HEK293T (cell line): ENCODE measurements at regions of chr5 and their contacts with region 1.

Region 1: GRCh38 chr5:31470608-31471007 is 61.3 kb downstream of the DROSHA start:
- DNase-seq: no peak

Region 2: GRCh38 chr5:31449174-31449573 is 21.4 kb before region 1 on chr5:
- CTCF ChIA-PET with region 1: interaction called, 11 read pairs
- POLR2A ChIA-PET with region 1: no interaction called
- DNase-seq: no peak

Region 3: DNA sequence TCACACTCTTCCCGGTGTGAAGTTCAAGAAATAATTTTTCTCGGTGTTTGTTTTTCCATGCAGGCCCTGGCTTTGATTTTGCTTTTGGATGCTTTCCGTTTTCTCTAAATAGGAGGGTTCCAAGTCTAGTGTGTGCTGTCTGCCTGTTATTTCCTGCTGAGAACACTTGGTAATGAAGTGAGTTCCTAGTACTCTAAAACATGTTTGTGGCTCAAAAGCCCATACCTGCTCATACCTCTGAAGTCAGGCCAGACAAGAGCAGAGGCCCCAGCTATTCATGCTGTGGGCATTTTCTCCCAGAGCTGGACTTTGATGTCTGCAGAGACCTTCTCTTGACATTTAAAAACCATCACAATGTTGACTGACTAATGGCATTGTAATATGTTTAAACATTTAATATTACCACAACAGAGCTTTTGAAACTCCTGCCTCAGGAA is 492.3 kb after region 1 on chr5:
- CTCF ChIA-PET with region 1: no interaction called
- POLR2A ChIA-PET with region 1: no interaction called
- DNase-seq: no peak